RWPE1 (cell line): ENCODE measurements at regions of chr6 and their contacts with region 1.

Region 1: DNA sequence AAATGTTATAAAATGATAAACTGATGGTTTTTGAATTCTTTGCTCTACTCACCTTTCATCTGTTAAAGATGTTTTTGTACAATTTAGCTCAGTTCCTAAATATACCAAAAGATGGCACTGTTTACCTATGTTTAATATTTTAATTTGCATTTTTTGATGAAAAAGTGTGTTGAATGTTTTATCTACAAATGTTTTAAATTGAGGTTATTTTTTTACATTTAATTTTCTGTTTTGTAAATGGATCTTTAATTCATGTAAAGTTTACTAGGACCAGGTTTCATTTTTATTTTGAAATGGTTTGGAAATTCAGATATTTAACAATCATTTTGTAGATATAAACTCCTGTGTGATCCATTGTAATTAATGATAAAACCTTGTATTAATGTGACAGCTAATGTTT is 30.0 kb downstream of the CDKAL1 start:
- DNase-seq: peak; percentile 10
- H3K27ac ChIP-seq: no peak overlapping the region
- CTCF ChIP-seq: peak; percentile 62

Region 2: DNA sequence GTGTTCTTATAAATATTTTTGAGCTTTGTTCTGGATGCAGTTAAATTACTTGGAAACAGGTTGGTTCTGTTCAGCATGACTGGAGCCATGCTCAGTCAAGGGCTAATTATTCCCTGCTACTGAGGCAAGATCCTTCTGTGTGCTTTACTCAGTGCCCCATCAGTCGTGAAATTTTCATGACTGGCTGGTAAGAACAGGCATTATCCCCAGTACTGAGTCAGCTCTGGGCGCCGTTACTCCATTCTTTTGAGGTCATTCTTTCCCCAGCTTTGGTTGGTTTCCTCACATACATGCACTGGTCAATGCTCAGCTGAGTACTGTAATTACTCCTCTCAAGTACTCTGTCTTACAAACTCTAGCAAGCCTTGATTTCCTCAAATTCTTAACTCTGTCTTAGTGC is 41.3 kb after region 1 on chr6:
- CTCF ChIA-PET with region 1: no interaction called
- POLR2A ChIA-PET with region 1: no interaction called
- DNase-seq: no peak
- H3K27ac ChIP-seq: no peak overlapping the region
- CTCF ChIP-seq: no peak

Region 3: DNA sequence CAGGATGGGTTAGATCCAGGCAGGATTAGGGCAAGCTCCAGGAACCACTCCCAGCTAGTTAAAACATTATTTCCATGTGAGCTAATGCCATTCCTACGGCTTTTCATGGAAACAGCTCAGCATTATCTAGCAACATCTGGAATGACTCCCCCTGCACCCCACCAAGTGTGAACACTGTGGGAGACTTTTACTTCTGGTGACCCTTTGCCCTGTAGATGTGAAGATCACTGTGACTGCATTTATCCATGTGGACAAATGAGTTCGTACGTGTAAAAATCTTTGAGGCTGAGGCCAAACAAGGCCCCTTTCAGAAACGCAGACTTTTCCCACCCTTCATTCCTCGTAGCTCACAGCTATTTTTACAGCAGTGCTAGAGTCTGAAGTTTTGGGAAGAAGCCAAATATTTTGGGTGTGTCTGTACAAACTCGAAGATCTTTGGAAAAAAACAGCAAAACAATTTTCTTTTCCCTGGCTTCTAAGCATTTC is 807.5 kb after region 1 on chr6:
- CTCF ChIA-PET with region 1: no interaction called
- POLR2A ChIA-PET with region 1: no interaction called
- DNase-seq: no peak
- H3K27ac ChIP-seq: no peak overlapping the region
- CTCF ChIP-seq: no peak

Region 4: DNA sequence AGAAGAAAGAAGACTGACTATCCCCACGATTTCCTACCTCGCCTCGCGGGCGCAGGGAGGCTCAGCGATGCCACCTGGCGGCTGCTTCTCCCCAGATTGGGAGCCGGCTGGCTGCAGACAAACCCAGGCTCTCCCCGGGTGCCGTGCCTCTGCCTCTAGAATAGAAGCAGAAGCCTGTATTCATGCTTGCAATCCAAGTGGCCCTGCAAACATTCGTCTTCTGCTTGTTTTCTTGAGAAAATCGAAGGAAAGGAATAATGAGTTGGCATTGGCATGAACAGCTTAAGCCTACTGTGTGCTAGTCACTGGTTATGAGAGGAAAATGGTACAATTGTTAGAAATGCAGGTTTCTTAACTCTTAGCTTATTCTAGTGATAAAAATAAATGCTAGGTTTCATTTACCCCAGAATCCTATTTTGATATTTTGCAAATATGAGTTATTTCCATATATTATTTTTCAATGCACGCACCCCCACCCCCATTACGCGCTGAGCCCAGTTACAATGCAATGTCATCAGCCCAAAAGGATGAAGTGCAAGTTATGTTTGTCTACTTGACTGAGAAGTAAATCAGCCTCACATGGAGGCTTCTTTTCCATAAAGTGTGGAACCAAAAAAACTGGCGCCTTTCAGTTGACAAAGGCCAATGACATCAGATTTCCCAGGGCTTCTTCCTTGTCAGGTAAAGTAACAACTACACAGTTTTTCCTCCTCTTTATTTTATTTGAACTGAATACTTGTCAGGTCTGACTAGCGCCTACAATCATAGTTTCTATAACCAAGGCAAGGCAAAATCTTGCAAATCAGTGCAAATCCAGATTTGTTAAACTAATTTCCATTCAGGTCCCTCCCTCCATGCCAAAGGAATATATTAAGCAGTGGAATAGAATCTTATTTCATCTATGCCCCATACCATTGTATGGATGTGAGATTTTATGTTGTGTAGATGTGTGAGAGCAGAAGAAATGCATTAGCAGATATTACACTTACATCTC is 1025.4 kb after region 1 on chr6:
- CTCF ChIA-PET with region 1: interaction called, 19 read pairs
- POLR2A ChIA-PET with region 1: interaction called, 3 read pairs
- DNase-seq: peak; percentile 67
- H3K27ac ChIP-seq: peak overlapping the region; percentile 91
- CTCF ChIP-seq: peak; percentile 89